AG04450 (cell line): ENCODE measurements at regions of chr4 and their contacts with region 1.

Region 1: GRCh38 chr4:183261953-183262775 is 57.9 kb downstream of the CLDN22 start:
- DNase-seq: peak; percentile 62
- H3K4me3 ChIP-seq: no peak overlapping the region
- H3K27ac ChIP-seq: no peak overlapping the region
- H3K27me3 ChIP-seq: no peaks in the 10 kb centered on the region
- CTCF ChIP-seq: peak; percentile 84

Region 2: GRCh38 chr4:182688081-182688480 is 574.1 kb before region 1 on chr4:
- CTCF ChIA-PET with region 1: no interaction called
- POLR2A ChIA-PET with region 1: no interaction called
- DNase-seq: no peak
- H3K4me3 ChIP-seq: no peak overlapping the region
- H3K27ac ChIP-seq: no peak overlapping the region
- H3K27me3 ChIP-seq: no peaks in the 10 kb centered on the region
- CTCF ChIP-seq: no peak

Region 3: DNA sequence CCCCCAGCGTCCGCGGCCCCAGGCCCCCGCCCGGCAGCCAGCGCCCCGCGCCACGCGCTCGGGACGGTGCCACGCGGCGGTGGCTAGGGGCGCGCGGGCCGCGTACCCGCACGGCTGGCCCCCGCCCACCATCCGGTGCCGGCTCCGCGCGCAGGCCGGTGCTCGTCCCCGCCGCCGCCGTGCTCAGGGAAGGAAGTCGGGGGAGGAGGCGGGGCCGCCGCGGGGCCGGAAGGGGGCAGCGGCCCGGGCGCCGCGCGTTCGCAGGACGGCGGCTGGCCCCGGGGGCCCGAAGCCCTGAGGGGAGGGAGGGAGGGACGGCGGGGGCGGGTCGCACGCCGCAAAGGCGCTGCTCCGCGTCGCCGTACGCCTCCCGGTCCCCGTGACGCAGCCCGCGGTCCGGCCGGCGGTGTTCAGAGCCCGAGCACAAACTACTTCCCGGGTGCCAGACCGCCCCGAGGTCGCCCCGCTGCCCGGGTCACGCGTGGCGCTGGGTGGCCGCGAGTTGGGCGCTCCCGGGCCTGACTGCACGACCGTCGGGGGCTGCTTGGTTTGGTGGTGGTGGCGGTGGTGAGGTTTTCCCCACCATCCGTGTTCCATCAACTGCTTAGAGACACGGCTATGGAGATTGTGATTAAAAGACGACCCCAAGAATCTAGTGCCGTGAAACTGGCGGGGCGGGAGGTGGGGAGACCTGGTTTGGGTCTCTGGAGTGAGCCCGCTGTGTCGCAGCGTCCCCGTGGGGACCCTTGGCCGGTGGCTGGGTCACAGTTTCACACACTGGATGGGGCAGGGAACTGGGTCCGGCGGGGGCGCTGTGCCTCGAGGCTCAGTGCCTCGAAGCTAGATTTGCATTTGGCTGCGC is 344.8 kb before region 1 on chr4 and contains the start of gene DCTD:
- CTCF ChIA-PET with region 1: interaction called, 34 read pairs
- POLR2A ChIA-PET with region 1: no interaction called
- DNase-seq: no peak
- H3K4me3 ChIP-seq: peak within 1 kb of the TSS; percentile 69
- H3K27ac ChIP-seq: peak within 1 kb of the TSS; percentile 84
- H3K27me3 ChIP-seq: no peaks in the 10 kb centered on the region
- CTCF ChIP-seq: peak; percentile 48
- polyA plus RNA-seq, gene DCTD: 183 and 195 TPM in 2 replicates

Region 4: DNA sequence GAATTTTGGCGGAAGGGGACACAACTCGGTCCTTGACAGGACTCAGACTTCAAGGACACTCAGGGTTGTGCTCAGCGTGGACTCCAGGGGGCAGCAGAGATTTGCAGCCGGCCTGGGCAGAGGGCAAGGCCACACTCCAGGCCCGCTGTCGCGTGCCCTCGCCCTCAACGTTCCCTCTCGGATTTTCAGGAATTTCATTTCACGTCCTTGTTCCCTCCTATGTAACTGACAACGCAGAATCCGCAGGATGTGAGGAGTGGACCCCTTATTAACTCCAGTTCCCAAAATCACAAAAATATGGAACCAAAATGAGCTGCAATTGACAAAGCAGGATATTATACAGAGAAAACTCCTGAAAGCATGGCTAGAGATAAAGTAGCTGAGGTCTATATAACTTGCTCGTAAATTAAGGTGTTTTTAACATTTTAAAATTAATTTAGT is 323.9 kb before region 1 on chr4:
- CTCF ChIA-PET with region 1: interaction called, 180 read pairs
- POLR2A ChIA-PET with region 1: no interaction called
- DNase-seq: no peak
- H3K4me3 ChIP-seq: no peak overlapping the region
- H3K27ac ChIP-seq: no peak overlapping the region
- H3K27me3 ChIP-seq: peaks cover 11% of the 10 kb centered on the region
- CTCF ChIP-seq: peak; percentile 95

Region 5: GRCh38 chr4:183074296-183074990 is 187.7 kb before region 1 on chr4:
- CTCF ChIA-PET with region 1: interaction called, 171 read pairs
- POLR2A ChIA-PET with region 1: no interaction called
- DNase-seq: peak; percentile 6
- H3K4me3 ChIP-seq: no peak overlapping the region
- H3K27ac ChIP-seq: no peak overlapping the region
- H3K27me3 ChIP-seq: no peaks in the 10 kb centered on the region
- CTCF ChIP-seq: no peak

Region 6: DNA sequence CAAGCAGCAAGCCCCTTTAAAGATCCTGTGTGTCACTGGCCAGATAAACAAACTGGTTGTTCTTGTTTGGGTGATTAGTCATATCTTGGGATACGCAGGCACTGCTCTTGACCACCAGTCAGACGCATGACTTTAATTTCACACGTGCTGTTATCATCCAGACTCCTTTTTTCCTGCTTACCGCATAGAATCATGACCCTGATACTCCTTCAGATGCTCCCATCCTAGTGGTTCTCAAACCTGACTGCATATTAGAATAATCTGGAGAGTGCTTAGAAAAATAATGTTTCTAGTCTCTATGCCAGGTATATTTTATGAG is 20.9 kb before region 1 on chr4:
- CTCF ChIA-PET with region 1: interaction called, 46 read pairs
- POLR2A ChIA-PET with region 1: no interaction called
- DNase-seq: peak; percentile 54
- H3K4me3 ChIP-seq: no peak overlapping the region
- H3K27ac ChIP-seq: no peak overlapping the region
- H3K27me3 ChIP-seq: no peaks in the 10 kb centered on the region
- CTCF ChIP-seq: no peak

Region 7: GRCh38 chr4:183272384-183272783 is 10.2 kb after region 1 on chr4:
- CTCF ChIA-PET with region 1: interaction called, 14 read pairs
- POLR2A ChIA-PET with region 1: no interaction called
- DNase-seq: no peak
- H3K4me3 ChIP-seq: no peak overlapping the region
- H3K27ac ChIP-seq: no peak overlapping the region
- H3K27me3 ChIP-seq: no peaks in the 10 kb centered on the region
- CTCF ChIP-seq: no peak